Body of pancreas (tissue), 4 donors: ENCODE measurements at regions of chrX and their contacts with region 1.

Region 1: DNA sequence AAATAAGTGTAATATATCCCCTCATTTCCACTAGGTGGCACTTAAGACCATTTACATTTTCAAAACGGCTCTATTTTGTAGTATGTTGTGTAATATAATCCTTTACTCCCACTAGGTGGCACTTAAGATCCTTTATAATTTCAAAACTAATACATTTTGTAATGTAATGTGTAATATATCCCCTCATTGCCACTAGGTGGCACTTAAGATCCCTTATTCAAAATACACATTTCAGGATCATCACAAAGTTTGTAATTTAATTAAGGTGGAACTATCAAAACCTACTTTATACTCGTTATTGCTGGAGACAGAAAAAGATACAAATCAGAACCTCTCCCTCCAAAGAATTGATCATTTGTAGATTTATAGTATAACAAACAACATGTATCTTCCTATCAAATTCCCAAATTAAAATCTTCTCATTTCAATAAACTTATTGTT is 132.5 kb downstream of the ARHGAP6 start:
- DNase-seq: no peak
- ATAC-seq: peak; percentile 100
- H3K4me3 ChIP-seq: no peak overlapping the region
- H3K27ac ChIP-seq: no peak overlapping the region
- H3K4me1 ChIP-seq: no peaks in the 10 kb centered on the region
- H3K27me3 ChIP-seq: no peaks in the 10 kb centered on the region
- CTCF ChIP-seq: peak; percentile 60 to 99 (median 95)
- POLR2A ChIP-seq: no peak

Region 2: DNA sequence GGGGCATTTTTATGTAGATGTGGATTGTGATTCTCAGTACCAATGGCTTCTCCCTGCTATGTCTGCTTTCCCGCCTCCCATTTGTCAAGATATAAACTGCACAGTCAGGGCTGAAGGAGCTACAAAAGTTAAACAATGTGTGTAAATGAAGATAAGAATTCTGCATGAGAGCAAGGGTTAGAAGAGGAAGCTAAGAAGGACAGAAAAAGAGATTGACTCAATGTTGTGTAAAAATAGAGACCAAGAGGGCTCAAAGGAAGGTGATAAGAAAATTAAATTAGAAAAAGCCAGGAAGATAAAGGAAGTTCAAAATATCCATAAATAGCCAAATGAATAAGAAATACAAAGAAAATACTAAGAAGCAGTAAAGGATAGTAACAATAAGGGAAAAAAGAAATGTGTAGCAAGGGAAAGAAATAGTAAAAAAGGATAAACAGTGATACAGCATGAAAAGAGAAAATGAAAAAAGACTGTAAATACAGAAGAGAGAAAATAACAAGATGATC is 157.6 kb before region 1 on chrX:
- intact Hi-C with region 1: no loop called
- DNase-seq: no peak
- ATAC-seq: no peak
- H3K4me3 ChIP-seq: no peak overlapping the region
- H3K27ac ChIP-seq: no peak overlapping the region
- H3K4me1 ChIP-seq: no peaks in the 10 kb centered on the region
- H3K27me3 ChIP-seq: no peaks in the 10 kb centered on the region
- CTCF ChIP-seq: no peak
- POLR2A ChIP-seq: no peak

Region 3: GRCh38 chrX:11597479-11597878 is 64.2 kb after region 1 on chrX:
- intact Hi-C with region 1: no loop called
- DNase-seq: no peak
- ATAC-seq: no peak
- H3K4me3 ChIP-seq: no peak overlapping the region
- H3K27ac ChIP-seq: no peak overlapping the region
- H3K4me1 ChIP-seq: no peaks in the 10 kb centered on the region
- H3K27me3 ChIP-seq: no peaks in the 10 kb centered on the region
- CTCF ChIP-seq: no peak
- POLR2A ChIP-seq: no peak

Region 4: GRCh38 chrX:11629593-11630211 is 96.5 kb after region 1 on chrX:
- intact Hi-C with region 1: no loop called
- DNase-seq: peak in 1 of 4 donors; percentile 14
- ATAC-seq: no peak
- H3K4me3 ChIP-seq: no peak overlapping the region
- H3K27ac ChIP-seq: no peak overlapping the region
- H3K4me1 ChIP-seq: no peaks in the 10 kb centered on the region
- H3K27me3 ChIP-seq: no peaks in the 10 kb centered on the region
- CTCF ChIP-seq: no peak
- POLR2A ChIP-seq: no peak

Region 5: DNA sequence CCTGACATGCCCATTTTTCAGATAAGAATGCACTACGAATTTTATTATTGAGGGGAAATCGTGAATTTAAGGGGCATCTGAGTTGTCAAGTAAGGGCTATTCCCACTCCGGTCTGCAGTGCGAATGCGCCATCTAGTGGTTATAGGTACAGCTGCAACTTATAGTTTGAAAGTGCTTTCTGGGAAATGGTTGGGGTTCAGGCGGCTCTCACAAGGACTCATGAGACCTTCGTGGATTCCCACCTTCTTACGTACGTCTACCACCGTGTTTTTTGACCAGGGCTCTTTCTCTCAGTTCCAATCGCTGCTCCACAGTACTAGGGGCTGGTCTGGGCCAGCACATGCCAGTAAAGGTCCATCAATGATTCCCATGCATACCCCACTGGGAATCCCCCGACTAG is 237.1 kb after region 1 on chrX:
- intact Hi-C with region 1: loop called (anchors 10 kb)
- DNase-seq: peak in 3 of 4 donors; percentile 36 to 41 (median 38)
- ATAC-seq: no peak
- H3K4me3 ChIP-seq: no peak overlapping the region
- H3K27ac ChIP-seq: no peak overlapping the region
- H3K4me1 ChIP-seq: no peaks in the 10 kb centered on the region
- H3K27me3 ChIP-seq: no peaks in the 10 kb centered on the region
- CTCF ChIP-seq: peak; percentile 57 to 78 (median 70)
- POLR2A ChIP-seq: no peak

Region 6: DNA sequence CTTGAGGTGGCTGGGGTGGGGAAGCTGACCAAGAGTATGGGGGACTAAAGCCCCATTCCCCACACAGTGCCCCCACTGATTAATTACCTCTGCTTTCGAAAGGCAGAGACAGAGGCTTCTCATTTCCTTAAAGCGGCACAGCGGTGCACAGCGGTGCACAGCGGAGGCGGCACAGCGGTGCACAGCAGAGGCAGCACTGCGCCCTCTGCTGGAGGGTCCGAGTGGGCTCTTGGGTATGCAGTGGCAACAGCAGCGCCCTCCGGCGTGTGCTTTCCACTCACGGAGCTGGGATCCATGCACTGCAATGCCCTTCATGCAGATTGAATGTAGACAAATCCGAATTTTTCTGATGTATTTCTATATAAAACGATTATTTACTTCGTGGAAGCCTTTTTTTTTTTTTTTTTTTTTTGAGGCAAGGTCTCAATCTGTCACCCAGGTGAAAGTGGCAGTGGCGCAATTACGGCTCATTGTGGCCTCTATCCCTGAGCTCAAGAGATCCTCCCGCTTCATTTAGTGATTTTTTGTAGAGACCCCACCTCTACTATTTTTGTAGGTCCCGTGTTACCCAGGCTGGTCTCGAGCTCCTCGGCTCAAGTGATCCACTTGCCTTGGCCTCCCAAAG is 1238.3 kb after region 1 on chrX:
- intact Hi-C with region 1: no loop called
- DNase-seq: peak; percentile 50 to 76 (median 58)
- ATAC-seq: peak; percentile 86
- H3K4me3 ChIP-seq: no peak overlapping the region
- H3K27ac ChIP-seq: no peak overlapping the region
- H3K4me1 ChIP-seq: no peaks in the 10 kb centered on the region
- H3K27me3 ChIP-seq: no peaks in the 10 kb centered on the region
- CTCF ChIP-seq: peak; percentile 16 to 64 (median 49)
- POLR2A ChIP-seq: no peak